PC-9 (cell line): ENCODE measurements at regions of chr12 and their contacts with region 1.

Region 1: DNA sequence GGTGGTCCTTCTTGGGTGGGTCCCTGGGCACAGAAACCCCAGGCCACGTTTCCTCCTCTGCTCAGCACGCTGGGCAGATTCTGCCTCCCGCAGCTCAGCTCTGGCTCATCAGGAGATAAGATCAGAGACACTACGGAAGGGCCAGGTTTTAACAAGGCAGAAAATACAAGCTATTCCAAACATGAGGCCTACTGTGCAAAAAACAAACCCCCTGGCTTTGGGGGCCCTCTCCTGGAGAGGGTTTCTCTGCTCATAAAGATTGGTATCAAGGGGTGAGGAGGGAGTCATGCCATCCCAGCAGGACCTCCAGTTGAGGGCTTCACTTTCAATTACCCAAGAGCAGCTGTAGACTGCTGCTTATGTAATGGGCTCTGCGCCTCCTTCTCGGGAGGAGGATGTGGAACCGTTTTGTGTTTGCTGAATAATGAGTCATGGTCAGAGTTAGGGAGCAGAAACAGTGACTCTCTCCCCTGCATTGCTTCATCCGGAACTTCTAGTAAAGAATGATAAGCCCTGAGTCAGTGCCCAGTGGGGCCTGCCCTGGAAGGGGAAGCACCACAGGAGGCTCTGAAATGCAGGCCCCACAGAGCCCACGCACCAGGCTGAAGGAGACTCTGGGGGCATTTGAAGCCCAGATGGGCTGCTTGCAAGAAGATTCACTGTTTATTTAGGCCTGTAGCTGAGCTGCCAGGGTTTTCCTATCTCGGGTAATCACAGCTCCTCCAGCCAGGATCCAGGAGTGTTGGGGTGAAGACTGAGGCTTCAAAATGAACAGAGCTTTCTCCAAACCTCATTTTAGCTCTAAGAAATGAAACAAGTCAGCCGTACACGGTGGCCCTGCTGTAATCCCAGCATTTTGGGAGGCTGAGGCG is 79.3 kb downstream of the SSPN start:
- DNase-seq: peak; percentile 88 to 99
- H3K4me3 ChIP-seq: peak overlapping the region; percentile 16; the same call in 1 of the 2 replicates
- H3K27ac ChIP-seq: peak overlapping the region; percentile 98
- H3K4me1 ChIP-seq: peaks cover 67% of the 10 kb centered on the region
- H3K27me3 ChIP-seq: no peaks in the 10 kb centered on the region
- CTCF ChIP-seq: peak; percentile 66

Region 2: GRCh38 chr12:25436203-25437030 is 838.3 kb before region 1 on chr12:
- CTCF ChIA-PET with region 1: no interaction called
- POLR2A ChIA-PET with region 1: no interaction called
- intact Hi-C with region 1: loop called (anchors 1 kb)
- DNase-seq: peak; percentile 44 to 58
- H3K4me3 ChIP-seq: peak overlapping the region; percentile 45; the same call in 1 of the 2 replicates
- H3K27ac ChIP-seq: no peak overlapping the region
- H3K4me1 ChIP-seq: no peaks in the 10 kb centered on the region
- H3K27me3 ChIP-seq: no peaks in the 10 kb centered on the region
- CTCF ChIP-seq: peak; percentile 93

Region 3: GRCh38 chr12:26153421-26154154 is 121.1 kb before region 1 on chr12:
- CTCF ChIA-PET with region 1: interaction called, 3 read pairs
- POLR2A ChIA-PET with region 1: no interaction called
- intact Hi-C with region 1: loop called (anchors 1 kb)
- DNase-seq: peak; percentile 61 to 97
- H3K4me3 ChIP-seq: peak overlapping the region; percentile 17; the same call in 1 of the 2 replicates
- H3K27ac ChIP-seq: peak overlapping the region; percentile 75
- H3K4me1 ChIP-seq: peaks cover 49% of the 10 kb centered on the region
- H3K27me3 ChIP-seq: no peaks in the 10 kb centered on the region
- CTCF ChIP-seq: peak; percentile 43; the same call in 1 of the 2 replicates

Region 4: GRCh38 chr12:26239122-26239851 is 35.4 kb before region 1 on chr12:
- CTCF ChIA-PET with region 1: interaction called, 12 read pairs
- POLR2A ChIA-PET with region 1: interaction called, 11 read pairs
- intact Hi-C with region 1: loop called (anchors 1 kb)
- DNase-seq: peak; percentile 91 to 99
- H3K4me3 ChIP-seq: peak overlapping the region; percentile 23; the same call in 1 of the 2 replicates
- H3K27ac ChIP-seq: peak overlapping the region; percentile 85
- H3K4me1 ChIP-seq: peaks cover 72% of the 10 kb centered on the region
- H3K27me3 ChIP-seq: no peaks in the 10 kb centered on the region
- CTCF ChIP-seq: no peak

Region 5: DNA sequence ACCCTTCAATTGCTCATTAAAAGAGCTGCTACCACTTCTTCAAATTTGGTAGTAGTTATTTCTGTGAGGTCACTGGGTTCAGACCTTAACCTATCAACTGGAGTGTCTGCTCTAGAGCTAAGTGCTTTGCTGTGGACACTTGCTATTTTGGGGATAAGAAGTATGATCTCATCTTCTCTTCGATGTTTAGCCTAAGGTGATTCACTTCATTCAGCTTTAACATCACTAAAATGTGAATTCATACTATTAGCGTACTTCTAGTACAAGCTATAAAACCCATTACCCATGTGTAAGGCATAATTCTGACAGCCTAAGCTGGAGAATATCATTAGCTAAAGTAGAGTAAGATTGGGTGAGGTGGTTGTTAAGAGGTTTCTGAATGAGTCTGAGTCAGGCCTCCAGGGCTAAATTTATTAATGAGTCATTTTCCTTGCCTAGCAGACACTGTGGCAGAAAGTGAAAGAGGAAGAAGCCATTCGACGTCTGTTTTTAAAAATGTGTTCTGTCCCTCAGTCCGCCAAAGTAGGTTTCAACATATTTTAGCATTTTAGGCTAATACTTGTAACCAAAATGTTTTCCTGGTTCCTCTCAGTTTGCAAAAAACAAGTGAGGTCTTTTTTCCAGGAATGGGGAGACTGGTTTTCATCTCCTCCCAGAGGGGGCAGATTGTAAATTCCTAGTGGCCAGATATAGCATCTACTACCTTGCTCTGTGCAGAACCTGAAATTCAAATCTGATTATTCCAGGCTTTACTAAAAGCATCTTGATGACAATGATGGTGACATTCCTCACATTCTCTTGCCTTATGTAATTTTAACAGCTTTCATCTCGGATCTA is 24.3 kb after region 1 on chr12:
- CTCF ChIA-PET with region 1: no interaction called
- POLR2A ChIA-PET with region 1: no interaction called
- intact Hi-C with region 1: loop called (anchors 2 kb)
- DNase-seq: peak; percentile 49 to 84
- H3K4me3 ChIP-seq: peak overlapping the region; percentile 56
- H3K27ac ChIP-seq: peak overlapping the region; percentile 85
- H3K4me1 ChIP-seq: peaks cover 19% of the 10 kb centered on the region
- H3K27me3 ChIP-seq: no peaks in the 10 kb centered on the region
- CTCF ChIP-seq: peak; percentile 62

Region 6: DNA sequence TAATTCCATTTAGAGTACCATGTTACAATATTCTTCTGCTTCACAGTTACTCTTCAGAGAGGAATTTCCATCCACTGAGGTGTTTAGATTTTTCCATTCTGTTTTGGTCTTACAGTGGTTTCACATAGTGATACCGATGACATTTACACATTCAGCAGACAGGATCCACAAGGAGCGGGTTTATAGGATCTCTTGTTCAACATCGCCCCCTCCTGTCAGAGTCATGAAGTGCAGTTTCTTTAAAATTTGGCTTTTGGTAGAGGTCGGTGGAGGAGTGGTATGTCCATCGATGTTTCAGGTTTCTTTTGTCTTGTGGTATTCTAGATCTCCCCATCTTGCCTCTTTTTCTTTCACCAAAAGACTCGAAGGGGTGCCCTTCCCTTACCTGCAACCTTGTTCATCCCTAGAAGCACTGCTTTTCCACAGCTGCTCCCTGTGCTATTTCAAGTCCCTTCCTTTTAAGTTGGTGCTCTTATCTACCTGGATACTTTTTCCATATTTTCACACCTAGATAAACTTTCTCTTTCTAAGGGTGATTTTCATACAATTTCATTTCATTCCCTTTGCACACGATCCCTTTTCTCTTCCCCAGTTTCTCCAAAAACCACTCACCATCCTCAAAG is 377.0 kb after region 1 on chr12:
- CTCF ChIA-PET with region 1: no interaction called
- POLR2A ChIA-PET with region 1: no interaction called
- intact Hi-C with region 1: loop called (anchors 1 kb)
- DNase-seq: peak; percentile 67 to 77
- H3K4me3 ChIP-seq: no peak overlapping the region
- H3K27ac ChIP-seq: no peak overlapping the region
- H3K4me1 ChIP-seq: peaks cover 12% of the 10 kb centered on the region; the same call in 1 of the 2 replicates
- H3K27me3 ChIP-seq: no peaks in the 10 kb centered on the region
- CTCF ChIP-seq: peak; percentile 97